Ovary (tissue), 10 donors: ENCODE measurements at regions of chr7 and their contacts with region 1.

Region 1: DNA sequence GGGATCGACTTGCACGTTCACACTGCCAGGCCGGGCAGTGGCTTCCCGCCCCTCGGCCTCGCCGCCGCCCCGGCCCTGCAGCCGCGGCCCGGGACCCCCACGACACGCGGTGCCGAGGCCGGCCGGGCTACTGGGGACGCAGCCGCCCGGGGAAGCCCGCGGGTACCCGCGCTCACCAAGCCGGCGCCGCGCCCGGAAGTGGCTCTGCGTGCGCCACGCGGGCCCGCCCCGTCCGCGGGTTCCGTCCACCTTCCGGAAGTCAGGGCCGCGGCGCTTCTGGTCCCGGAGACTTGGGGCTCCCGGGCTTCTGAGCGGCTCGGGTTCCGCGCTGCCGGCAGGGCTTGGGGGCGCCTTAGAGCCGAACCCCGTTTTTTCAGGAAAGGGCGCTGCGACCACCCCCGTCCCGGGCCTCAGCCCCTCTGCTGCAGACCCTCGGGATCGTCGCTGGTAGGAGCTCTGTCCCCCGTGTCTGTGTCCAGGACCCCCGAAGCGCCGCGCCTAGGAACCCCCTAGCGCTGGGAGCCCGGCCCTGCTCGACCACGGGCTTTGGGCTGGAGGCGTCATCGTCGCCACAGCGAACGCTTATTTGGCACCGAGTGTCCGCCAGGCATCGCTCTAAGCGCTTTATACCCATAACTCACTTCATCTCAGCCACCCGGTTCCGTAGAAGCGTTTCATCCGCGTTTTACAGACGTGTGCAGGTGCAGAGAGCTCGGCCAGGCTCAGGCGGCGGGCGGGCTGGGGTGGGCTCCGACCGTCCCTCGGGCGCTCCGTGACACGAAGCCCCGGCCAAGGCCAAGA is at the start of gene PSMG3:
- DNase-seq: peak; percentile 89 to 94 (median 91)
- H3K4me3 ChIP-seq: peak within 1 kb of the TSS; percentile 87
- H3K27ac ChIP-seq: peak within 1 kb of the TSS; percentile 62 to 87
- H3K4me1 ChIP-seq: peaks cover 7% of the 10 kb centered on the region
- H3K27me3 ChIP-seq: no peaks in the 10 kb centered on the region
- CTCF ChIP-seq: peak; percentile 2 to 69 (median 51)
- EP300 ChIP-seq: no peak
- POLR2A ChIP-seq: peak; percentile 75
- total RNA-seq, gene PSMG3: 15.6 to 34.5 (median 18.6) TPM

Region 2: DNA sequence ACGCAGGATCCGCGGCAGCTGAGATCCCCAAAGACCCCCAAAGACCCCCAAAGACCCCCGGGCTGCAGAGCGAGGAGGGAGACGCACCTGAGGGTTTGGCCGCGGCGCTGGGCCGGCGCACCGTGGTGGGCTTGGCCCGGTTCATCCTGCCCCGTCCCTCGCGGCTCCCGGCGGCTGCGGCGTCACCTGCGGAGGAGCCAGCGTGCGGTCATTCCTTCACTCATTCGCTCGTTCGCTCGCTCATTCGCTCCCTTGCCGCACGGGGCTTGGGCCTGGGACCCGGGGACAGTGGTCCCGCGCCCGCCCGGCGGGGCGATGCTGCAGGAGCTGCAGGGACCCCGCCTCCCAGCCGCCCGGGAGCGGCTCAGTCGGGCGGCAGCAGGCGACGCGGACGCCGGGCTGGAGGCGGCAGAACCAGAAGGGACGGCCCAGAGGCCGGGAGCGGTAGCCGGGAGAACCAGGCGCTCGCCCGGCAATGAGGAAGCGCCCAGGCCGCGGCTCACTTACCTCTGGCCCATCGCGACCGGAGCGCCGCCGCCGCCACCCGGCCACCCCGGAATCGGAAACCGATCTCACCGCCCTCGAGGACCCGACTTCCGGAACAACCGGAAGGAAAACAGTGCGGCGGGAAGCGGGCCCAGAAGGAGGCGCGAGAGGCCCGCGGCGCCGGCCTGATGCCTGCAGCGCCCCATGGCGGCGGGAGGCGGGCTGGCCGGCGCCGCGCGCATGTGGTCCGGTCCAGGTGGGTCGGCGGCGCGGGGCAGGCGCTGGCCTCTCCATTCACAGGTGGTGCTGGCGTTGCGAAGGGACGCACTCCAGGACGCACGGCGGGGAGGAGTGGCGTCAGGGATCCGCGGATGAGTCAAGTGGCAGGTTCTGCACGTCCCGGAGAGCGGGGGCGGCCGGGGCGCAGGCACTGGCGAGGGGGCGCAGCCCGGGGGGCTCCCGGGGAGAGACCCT is 65.9 kb before region 1 on chr7 and contains the start of gene INTS1:
- intact Hi-C with region 1: loop called in 1 of 4 experiments (anchors 5 kb)
- DNase-seq: peak; percentile 87 to 94 (median 91)
- H3K4me3 ChIP-seq: peak within 1 kb of the TSS; percentile 99
- H3K27ac ChIP-seq: no peak within 1 kb of the TSS
- H3K4me1 ChIP-seq: peaks cover 10% of the 10 kb centered on the region
- H3K27me3 ChIP-seq: no peaks in the 10 kb centered on the region
- CTCF ChIP-seq: peak; percentile 90 to 98 (median 96)
- EP300 ChIP-seq: no peak
- POLR2A ChIP-seq: peak; percentile 45
- total RNA-seq, gene INTS1: 28.5 to 80.5 (median 70.6) TPM

Region 3: DNA sequence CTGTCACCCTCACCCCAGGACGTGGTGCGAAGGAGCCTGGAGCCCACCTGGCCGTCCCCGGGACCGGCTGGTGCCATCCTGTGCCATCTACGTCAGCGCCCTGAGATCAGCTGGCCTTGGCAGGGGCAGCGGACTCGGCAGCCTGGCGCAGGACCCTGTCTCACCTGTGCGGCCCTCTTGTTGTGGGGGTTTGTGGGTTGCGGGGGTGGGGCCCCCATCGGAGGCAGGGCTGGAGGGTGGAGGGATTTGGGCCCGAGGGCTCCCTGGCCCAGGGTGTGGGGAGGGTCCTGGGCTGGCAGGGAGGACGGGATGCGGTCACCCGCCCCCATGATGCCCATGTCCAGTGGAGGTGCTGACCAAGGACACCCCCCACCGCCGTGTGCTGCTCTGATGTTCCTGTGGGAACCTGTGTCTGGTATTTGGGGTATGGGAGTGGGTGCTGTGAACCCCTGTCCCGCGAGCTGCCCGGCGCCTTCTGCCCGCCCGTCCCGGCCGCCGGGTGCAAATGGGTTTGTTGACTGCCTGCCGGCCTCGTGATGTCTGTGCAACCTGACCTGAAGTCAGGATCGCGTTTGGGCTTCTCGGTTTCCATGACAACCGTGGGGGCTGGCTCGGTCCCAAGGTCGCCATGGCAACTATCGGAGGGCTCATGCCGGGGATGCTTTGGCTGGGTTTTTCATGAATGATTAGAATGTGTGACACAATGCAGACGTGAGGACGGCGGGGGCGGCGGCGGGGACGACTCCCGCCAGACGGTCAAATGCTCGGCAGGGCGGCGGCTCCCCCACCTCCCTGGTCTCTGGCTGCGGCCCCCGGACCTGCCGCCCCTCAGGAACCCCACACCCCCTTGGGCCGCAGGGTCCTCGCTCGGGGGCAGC is 32.3 kb before region 1 on chr7:
- intact Hi-C with region 1: loop called in 1 of 4 experiments (anchors 5 kb)
- DNase-seq: peak; percentile 91 to 99 (median 97)
- H3K4me3 ChIP-seq: peak overlapping the region; percentile 45
- H3K27ac ChIP-seq: peak overlapping the region; percentile 82 to 91
- H3K4me1 ChIP-seq: peaks cover 21% of the 10 kb centered on the region
- H3K27me3 ChIP-seq: no peaks in the 10 kb centered on the region
- CTCF ChIP-seq: peak in 1 of 3 donors; percentile 26
- EP300 ChIP-seq: peak; percentile 87
- POLR2A ChIP-seq: peak; percentile 71